HCT116 (cell line): ENCODE measurements at regions of chr7 and their contacts with region 1.

Region 1: DNA sequence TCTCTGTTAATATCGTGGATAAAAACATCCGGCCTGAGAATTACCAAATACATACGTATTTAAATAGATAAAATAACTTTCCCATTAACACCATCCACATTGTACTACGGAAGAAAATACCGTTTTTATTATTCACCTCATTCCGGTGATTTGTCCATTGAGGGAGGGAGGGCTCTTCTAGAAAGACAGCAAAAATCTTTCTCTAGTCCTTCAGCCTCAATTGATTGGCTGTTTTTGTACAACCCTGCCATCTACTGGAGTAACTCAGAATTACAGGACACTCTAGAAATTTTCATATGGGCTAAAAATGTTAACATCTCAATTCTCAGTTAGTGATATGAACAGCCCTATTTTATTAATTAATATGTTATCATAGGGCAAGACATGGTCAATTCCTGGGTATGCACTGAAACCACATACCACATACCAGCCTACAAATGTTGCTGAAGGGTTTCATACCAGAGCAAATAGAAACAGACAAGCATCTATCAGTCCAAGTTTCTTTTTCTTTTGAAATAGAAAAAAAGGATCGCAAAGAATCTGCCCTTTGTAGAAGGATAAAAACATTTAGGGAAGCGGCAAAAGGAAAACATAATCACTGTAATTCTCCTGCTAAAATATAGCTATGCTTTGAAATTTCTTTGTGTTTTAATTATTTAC is 55.8 kb upstream of the CDCA7L start:
- DNase-seq: peak; percentile 36
- ATAC-seq: peak; percentile 92
- H3K4me3 ChIP-seq: no peak overlapping the region
- H3K27ac ChIP-seq: no peak overlapping the region
- H3K4me1 ChIP-seq: 0 out of 4 replicates have a peak, but pooled peaks cover 0 to 3% of the 10 kb centered on the region in 2 experiments
- H3K27me3 ChIP-seq: peaks cover 6% of the 10 kb centered on the region; the same call in 1 of the 2 replicates
- CTCF ChIP-seq: peak; percentile 57 to 80 (median 70); a peak in 5 of 6 replicates
- POLR2A ChIP-seq: no peak
- RAD21 ChIP-seq: peak; percentile 91

Region 2: GRCh38 chr7:21261627-21262594 is 739.6 kb before region 1 on chr7:
- CTCF ChIA-PET with region 1: no interaction called
- POLR2A ChIA-PET with region 1: no interaction called
- RAD21 ChIA-PET with region 1: no interaction called
- intact Hi-C with region 1: loop called (anchors 2 kb)
- DNase-seq: peak; percentile 44
- ATAC-seq: peak; percentile 98
- H3K4me3 ChIP-seq: no peak overlapping the region
- H3K27ac ChIP-seq: no peak overlapping the region
- H3K4me1 ChIP-seq: no peaks in the 10 kb centered on the region
- H3K27me3 ChIP-seq: no peaks in the 10 kb centered on the region
- CTCF ChIP-seq: peak; percentile 69 to 79 (median 74)
- POLR2A ChIP-seq: no peak
- RAD21 ChIP-seq: peak; percentile 68

Region 3: GRCh38 chr7:22094413-22095342 is 93.2 kb after region 1 on chr7:
- CTCF ChIA-PET with region 1: no interaction called
- POLR2A ChIA-PET with region 1: no interaction called
- RAD21 ChIA-PET with region 1: no interaction called
- intact Hi-C with region 1: no loop called
- DNase-seq: no peak
- ATAC-seq: peak; percentile 80
- H3K4me3 ChIP-seq: no peak overlapping the region
- H3K27ac ChIP-seq: no peak overlapping the region
- H3K4me1 ChIP-seq: no peaks in the 10 kb centered on the region
- H3K27me3 ChIP-seq: no peaks in the 10 kb centered on the region
- CTCF ChIP-seq: peak in 2 of 3 experiments; percentile 37 to 39; a peak in 2 of 6 replicates
- POLR2A ChIP-seq: no peak
- RAD21 ChIP-seq: no peak